WTC11 (cell line): ENCODE measurements at regions of chr1 and their contacts with region 1.

Region 1: DNA sequence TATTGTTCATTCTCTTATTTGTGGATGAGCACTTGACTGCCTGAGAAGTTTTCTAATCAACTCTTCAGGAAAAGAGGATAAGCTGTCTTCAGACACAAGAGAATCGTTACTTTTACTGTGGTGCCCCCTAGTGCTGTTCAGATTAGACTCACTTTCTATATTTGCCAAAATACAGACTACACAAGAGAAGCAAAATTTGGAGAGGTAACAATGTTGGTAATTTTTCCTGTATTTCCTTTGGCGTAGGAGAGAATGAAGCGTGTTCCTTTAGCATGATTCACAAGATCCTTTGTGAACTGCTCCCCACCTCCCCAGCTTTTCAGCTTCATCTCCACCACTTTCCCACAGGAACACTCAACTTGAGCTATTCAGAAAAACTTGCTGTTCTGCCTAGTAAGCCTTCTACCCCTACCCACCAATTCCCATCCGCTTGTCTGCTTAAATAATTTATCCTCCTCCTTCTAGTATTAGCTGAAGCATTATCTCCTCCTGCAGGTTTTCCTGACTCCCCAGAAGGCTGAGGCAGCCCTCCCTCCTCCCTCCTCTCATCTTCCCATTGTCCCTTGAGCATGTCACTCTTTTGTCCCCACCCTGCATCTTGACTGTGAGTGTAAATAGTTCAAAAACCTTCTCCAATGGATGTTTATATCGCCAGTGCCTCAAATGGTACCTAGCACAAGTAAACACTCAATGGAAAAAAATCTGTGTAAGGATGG is 4.5 kb downstream of the TNFSF4 start:
- DNase-seq: no peak
- ATAC-seq: peak; percentile 86
- H3K4me3 Mint-ChIP-seq: no peak overlapping the region
- H3K27ac Mint-ChIP-seq: no peak overlapping the region
- H3K4me1 Mint-ChIP-seq: peaks cover 13% of the 10 kb centered on the region
- H3K27me3 Mint-ChIP-seq: peaks cover 12% of the 10 kb centered on the region
- CTCF ChIP-seq: no peak

Region 2: DNA sequence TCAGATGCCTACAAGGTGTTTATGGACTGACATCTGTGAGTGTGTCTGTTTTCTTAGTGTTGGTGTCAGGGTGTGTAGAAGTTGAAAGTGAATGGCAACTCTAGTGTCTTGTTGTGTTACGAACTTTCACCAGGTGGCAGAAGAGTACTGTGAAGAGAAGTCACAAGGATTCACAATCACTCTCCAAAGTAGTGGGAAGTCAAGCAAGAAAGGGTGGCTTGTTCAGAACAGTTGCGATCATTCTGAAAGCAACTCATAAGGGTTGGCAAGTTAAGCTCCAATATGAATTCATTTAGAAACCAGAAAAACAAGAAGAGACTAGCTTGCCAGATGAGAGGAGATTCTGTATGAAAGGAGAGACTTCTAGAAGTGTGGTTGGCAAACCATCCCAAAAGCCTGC is 457.6 kb before region 1 on chr1:
- CTCF ChIA-PET with region 1: interaction called, 10 read pairs
- POLR2A ChIA-PET with region 1: no interaction called
- DNase-seq: no peak
- ATAC-seq: peak; percentile 90
- H3K4me3 Mint-ChIP-seq: no peak overlapping the region
- H3K27ac Mint-ChIP-seq: no peak overlapping the region
- H3K4me1 Mint-ChIP-seq: no peaks in the 10 kb centered on the region
- H3K27me3 Mint-ChIP-seq: no peaks in the 10 kb centered on the region; the same call in 1 of the 2 replicates
- CTCF ChIP-seq: 0 out of 2 replicates have a peak, but pooled peaks have one; percentile 47

Region 3: DNA sequence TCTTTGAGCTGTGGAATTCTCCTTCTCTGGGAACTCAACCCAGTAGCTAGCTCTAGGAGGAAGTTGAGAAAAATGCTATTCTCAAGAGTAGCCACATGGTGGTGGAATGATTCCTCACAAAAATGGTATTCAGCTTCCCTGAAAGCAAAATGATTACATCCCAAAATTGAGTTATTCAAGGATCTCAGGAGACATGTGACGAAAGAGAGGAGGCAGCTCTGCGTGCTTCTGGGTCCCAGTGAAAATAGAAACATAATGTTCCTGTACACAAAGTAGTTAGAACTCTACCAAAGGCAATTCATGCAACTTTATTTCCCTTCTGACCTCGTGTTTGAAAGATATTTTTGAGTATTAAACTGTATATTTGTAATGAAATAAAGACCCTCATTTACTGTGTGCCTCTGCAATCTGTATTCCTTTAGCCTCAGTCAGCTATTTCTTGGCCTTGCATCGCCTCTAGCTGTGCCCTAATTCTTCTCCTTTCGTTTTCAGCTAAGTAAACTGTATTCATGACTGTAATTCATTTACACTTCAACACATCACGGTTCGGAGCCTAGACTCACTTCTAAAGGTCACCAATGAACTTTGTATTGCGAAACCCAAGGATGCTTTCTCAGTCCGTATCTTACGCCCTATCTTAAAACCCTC is 376.4 kb before region 1 on chr1:
- CTCF ChIA-PET with region 1: interaction called, 81 read pairs
- POLR2A ChIA-PET with region 1: no interaction called
- DNase-seq: no peak
- ATAC-seq: peak; percentile 87
- H3K4me3 Mint-ChIP-seq: no peak overlapping the region
- H3K27ac Mint-ChIP-seq: no peak overlapping the region
- H3K4me1 Mint-ChIP-seq: no peaks in the 10 kb centered on the region
- H3K27me3 Mint-ChIP-seq: peaks cover 6% of the 10 kb centered on the region; the same call in 1 of the 2 replicates
- CTCF ChIP-seq: no peak

Region 4: GRCh38 chr1:172969611-172970010 is 233.0 kb before region 1 on chr1:
- CTCF ChIA-PET with region 1: interaction called, 4 read pairs
- POLR2A ChIA-PET with region 1: interaction called, 10 read pairs
- DNase-seq: no peak
- ATAC-seq: no peak
- H3K4me3 Mint-ChIP-seq: no peak overlapping the region
- H3K27ac Mint-ChIP-seq: no peak overlapping the region
- H3K4me1 Mint-ChIP-seq: no peaks in the 10 kb centered on the region
- H3K27me3 Mint-ChIP-seq: no peaks in the 10 kb centered on the region
- CTCF ChIP-seq: no peak

Region 5: GRCh38 chr1:173009597-173009996 is 193.0 kb before region 1 on chr1:
- CTCF ChIA-PET with region 1: no interaction called
- POLR2A ChIA-PET with region 1: no interaction called
- DNase-seq: no peak
- ATAC-seq: no peak
- H3K4me3 Mint-ChIP-seq: no peak overlapping the region
- H3K27ac Mint-ChIP-seq: no peak overlapping the region
- H3K4me1 Mint-ChIP-seq: peaks cover 8% of the 10 kb centered on the region
- H3K27me3 Mint-ChIP-seq: no peaks in the 10 kb centered on the region; the same call in 1 of the 2 replicates
- CTCF ChIP-seq: no peak

Region 6: DNA sequence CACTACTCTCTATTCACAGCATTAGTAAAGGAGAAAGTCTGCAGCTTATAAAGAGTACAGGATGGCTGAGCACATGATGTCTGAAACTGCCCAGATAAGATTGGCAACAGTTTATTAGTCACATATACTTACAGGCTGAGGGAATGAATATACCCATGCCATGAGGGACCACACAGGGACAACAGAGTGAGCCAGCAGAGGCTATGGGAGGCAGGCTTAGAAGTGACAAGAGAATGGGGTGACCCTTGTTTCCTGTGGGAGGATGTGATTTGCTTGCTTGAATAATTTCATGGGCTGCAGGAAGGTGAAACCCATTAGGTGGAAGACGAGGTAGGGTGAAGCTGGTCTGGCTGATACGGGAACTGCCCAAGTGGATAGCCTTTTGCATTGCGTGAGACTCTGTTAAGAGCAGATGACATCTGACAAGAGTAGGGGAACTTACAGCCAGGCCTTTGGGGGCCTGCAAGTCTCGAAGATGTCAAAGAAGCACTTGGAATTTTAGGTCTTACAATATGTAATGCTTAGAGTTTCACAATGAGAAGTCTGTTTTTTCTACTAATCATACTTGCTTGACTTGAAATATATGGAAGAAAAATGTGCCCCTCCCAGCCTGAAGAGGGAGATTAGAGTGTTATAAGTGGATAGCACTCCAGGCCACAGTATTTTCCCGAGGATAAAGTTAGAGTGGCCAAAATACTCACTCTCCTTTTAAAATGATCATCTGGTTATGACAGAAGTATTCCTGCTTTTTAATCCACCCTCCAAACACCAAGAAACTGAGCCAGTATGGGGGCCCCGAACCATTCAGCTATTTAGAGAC is 39.1 kb after region 1 on chr1:
- CTCF ChIA-PET with region 1: no interaction called
- POLR2A ChIA-PET with region 1: no interaction called
- DNase-seq: no peak
- ATAC-seq: no peak
- H3K4me3 Mint-ChIP-seq: no peak overlapping the region
- H3K27ac Mint-ChIP-seq: no peak overlapping the region
- H3K4me1 Mint-ChIP-seq: peaks cover 6% of the 10 kb centered on the region
- H3K27me3 Mint-ChIP-seq: peaks cover 2% of the 10 kb centered on the region; the same call in 1 of the 2 replicates
- CTCF ChIP-seq: no peak